Naive thymus-derived CD4-positive, alpha-beta T cell (primary cell): ENCODE measurements at regions of chr1 and their contacts with region 1.

Region 1: GRCh38 chr1:5370311-5370710 is 621.9 kb downstream of the NPHP4 start:
- DNase-seq: no peak
- ATAC-seq: no peak
- H3K4me3 ChIP-seq: peak overlapping the region; percentile 14
- H3K4me3 Mint-ChIP-seq: peak overlapping the region in 7 of 10 donors; percentile 2 to 66 (median 38)
- H3K27ac ChIP-seq: no peak overlapping the region
- H3K27ac Mint-ChIP-seq: peak overlapping the region in 2 of 9 donors; percentile 21 to 49
- H3K4me1 ChIP-seq: peaks cover 14 to 15% of the 10 kb centered on the region in 2 donors
- H3K4me1 Mint-ChIP-seq: peaks cover 12 to 40% (median 24%) of the 10 kb centered on the region in 7 donors
- H3K27me3 ChIP-seq: no peaks in the 10 kb centered on the region
- H3K27me3 Mint-ChIP-seq: peaks cover 0 to 8% (median 0%) of the 10 kb centered on the region in 5 donors

Region 2: GRCh38 chr1:5338466-5338865 is 31.8 kb before region 1 on chr1:
- CTCF ChIA-PET with region 1: no interaction called
- POLR2A ChIA-PET with region 1: no interaction called
- intact Hi-C with region 1: loop called in 1 of 2 experiments (anchors 5 kb)
- DNase-seq: no peak
- ATAC-seq: no peak
- H3K4me3 ChIP-seq: no peak overlapping the region
- H3K4me3 Mint-ChIP-seq: peak overlapping the region in 2 of 10 donors; percentile 27 to 45
- H3K27ac ChIP-seq: no peak overlapping the region
- H3K27ac Mint-ChIP-seq: peak overlapping the region in 3 of 9 donors; percentile 34 to 57 (median 39)
- H3K4me1 ChIP-seq: peaks cover 0 to 5% of the 10 kb centered on the region in 2 donors
- H3K4me1 Mint-ChIP-seq: peaks cover 2 to 53% (median 39%) of the 10 kb centered on the region in 7 donors
- H3K27me3 ChIP-seq: no peaks in the 10 kb centered on the region
- H3K27me3 Mint-ChIP-seq: peaks cover 0 to 4% (median 0%) of the 10 kb centered on the region in 5 donors